ENCODE measurements at regions of chr4 and their contacts with region 1.

Region 1: DNA sequence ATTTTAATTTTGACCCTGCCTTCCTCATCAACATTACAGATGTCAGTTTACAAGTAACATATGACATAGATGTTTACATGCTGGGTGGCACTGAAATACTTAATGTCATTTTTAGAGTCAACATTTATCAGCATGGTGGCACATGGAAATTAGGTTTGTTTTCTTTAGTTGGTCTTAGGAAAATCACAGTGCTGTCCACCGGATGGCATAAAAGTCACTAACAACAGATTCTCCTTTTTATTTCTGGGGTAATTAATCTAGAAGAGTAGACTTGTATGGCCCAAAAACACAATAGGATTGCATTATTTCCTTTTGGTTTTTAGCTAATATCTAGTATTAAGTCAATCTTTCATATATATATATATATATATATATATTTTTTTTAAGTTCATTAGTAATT is 88.6 kb upstream of the HHIP start:
- DNase-seq: no peak

Region 2: GRCh38 chr4:142801966-142802365 is 1755.4 kb before region 1 on chr4:
- intact Hi-C with region 1: no loop called
- DNase-seq: no peak

Region 3: DNA sequence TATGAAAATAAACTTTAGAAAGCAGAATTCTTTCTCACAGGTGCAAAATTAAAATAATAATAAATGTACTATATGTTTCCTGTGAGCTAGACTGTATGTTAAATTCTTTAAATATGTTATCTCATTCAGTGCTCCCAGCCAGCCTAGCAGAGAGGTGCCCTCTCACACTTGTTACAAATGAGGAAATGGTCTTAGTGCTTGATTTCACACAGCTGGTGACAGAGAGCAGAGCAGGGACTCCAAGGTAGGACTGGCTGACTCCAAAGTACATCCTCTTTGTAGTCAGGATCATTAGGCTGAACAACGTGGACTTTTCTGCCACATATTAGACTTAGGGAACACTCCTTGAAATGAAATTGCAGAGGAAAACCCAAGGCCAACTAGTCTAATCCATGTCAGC is 16.6 kb after region 1 on chr4:
- intact Hi-C with region 1: loop called in 1 of 2 experiments (anchors 1 kb)
- DNase-seq: no peak

Region 4: DNA sequence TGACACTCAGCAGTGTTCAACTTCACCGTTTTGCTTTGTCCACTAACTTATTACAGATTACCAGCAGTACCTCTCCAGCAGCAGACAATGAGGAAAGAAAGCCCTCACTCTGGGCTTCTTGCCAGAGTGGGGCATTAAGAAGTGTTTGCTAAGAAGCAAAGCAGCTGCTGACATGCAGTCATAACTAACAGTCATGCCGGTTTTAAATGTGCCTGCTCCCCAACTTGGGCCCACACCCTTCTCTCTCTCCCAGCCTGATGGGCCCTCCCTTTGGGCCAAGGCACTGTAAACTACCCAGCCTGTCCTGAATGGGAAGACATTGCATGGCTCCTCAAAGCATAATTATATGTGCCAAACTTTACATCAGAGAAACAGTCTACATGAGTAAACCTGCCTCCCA is 34.0 kb after region 1 on chr4:
- intact Hi-C with region 1: no loop called
- DNase-seq: no peak